Lower leg skin (tissue), 4 donors: ENCODE measurements at regions of chr6 and their contacts with region 1.

Region 1: GRCh38 chr6:89494131-89494796 is 61.3 kb downstream of the ANKRD6 start:
- DNase-seq: no peak
- H3K4me3 ChIP-seq: no peak overlapping the region
- CTCF ChIP-seq: no peak
- POLR2A ChIP-seq: no peak

Region 2: GRCh38 chr6:89475634-89476033 is 18.6 kb before region 1 on chr6:
- intact Hi-C with region 1: no loop called
- DNase-seq: no peak
- H3K4me3 ChIP-seq: no peak overlapping the region
- CTCF ChIP-seq: no peak
- POLR2A ChIP-seq: no peak

Region 3: GRCh38 chr6:89597988-89598692 is 103.9 kb after region 1 on chr6:
- intact Hi-C with region 1: loop called (anchors 10 kb)
- DNase-seq: no peak
- H3K4me3 ChIP-seq: no peak overlapping the region
- CTCF ChIP-seq: no peak
- POLR2A ChIP-seq: no peak